ENCODE measurements at regions of chr1 and their contacts with region 1.

Region 1: GRCh38 chr1:36172983-36173382 is 17.0 kb downstream of the MAP7D1 start:
- DNase-seq: no peak
- ATAC-seq: no peak
- H3K4me3 ChIP-seq: no peak overlapping the region
- H3K4me3 Mint-ChIP-seq: no peak overlapping the region
- H3K27ac ChIP-seq: no peak overlapping the region
- H3K27ac Mint-ChIP-seq: peak overlapping the region; percentile 34 to 39
- H3K4me1 ChIP-seq: peaks cover 0 to 27% of the 10 kb centered on the region in 2 experiments
- H3K4me1 Mint-ChIP-seq: peaks cover 22 to 30% (median 23%) of the 10 kb centered on the region in 3 donors
- H3K27me3 ChIP-seq: no peaks in the 10 kb centered on the region
- H3K27me3 Mint-ChIP-seq: no peaks in the 10 kb centered on the region

Region 2: GRCh38 chr1:36040238-36040637 is 132.7 kb before region 1 on chr1:
- CTCF ChIA-PET with region 1: no interaction called
- POLR2A ChIA-PET with region 1: no interaction called
- DNase-seq: no peak
- ATAC-seq: no peak
- H3K4me3 ChIP-seq: no peak overlapping the region
- H3K4me3 Mint-ChIP-seq: no peak overlapping the region
- H3K27ac ChIP-seq: no peak overlapping the region
- H3K27ac Mint-ChIP-seq: no peak overlapping the region
- H3K4me1 ChIP-seq: no peaks in the 10 kb centered on the region
- H3K4me1 Mint-ChIP-seq: no peaks in the 10 kb centered on the region
- H3K27me3 ChIP-seq: no peaks in the 10 kb centered on the region
- H3K27me3 Mint-ChIP-seq: no peaks in the 10 kb centered on the region

Region 3: DNA sequence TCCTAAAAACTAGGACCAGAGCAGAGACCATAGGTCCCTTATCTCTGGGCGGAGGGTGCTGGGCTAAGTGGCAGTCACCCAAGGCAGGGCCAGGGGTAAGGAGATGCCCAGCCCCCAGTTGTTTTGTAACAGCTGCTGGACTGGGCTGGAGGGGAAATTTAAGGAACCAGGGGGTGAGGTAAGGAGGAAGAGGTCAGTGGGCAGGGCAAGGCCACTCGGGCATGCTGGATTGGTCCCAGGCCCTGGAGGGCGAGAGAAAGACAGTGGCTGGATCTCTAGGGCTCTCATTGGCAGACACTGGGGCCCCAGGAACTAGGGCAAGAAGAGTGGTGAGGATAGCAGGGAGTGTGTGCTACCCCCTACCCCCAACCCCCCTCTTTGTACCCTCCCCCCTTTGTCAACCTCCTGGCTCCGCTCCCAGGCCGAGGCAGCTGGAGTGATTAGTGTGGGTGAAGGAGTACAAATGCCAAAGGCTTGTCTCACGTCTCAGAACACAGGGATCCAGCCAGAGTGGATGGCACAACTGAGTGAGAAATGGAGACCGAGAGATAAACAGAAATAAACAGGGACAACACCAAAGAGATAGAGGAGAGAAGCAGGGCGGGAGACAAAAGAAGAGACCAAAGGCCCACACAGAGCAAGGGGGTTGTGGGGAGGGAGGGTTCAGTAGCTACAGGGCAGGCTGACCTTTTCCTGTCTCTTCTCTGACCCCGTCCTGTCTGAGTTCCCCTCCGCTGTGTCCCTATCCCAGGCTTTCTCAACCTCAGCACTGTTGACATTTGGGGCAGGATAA is 30.8 kb after region 1 on chr1:
- CTCF ChIA-PET with region 1: interaction called in 1 of 2 experiments, 11 read pairs
- POLR2A ChIA-PET with region 1: no interaction called
- DNase-seq: peak in 2 of 35 experiments; percentile 9 to 20
- ATAC-seq: no peak
- H3K4me3 ChIP-seq: no peak overlapping the region
- H3K4me3 Mint-ChIP-seq: no peak overlapping the region
- H3K27ac ChIP-seq: no peak overlapping the region
- H3K27ac Mint-ChIP-seq: no peak overlapping the region
- H3K4me1 ChIP-seq: no peaks in the 10 kb centered on the region
- H3K4me1 Mint-ChIP-seq: no peaks in the 10 kb centered on the region
- H3K27me3 ChIP-seq: peaks cover 0 to 22% of the 10 kb centered on the region in 2 experiments
- H3K27me3 Mint-ChIP-seq: peaks cover 0 to 4% of the 10 kb centered on the region in 2 donors

Region 4: DNA sequence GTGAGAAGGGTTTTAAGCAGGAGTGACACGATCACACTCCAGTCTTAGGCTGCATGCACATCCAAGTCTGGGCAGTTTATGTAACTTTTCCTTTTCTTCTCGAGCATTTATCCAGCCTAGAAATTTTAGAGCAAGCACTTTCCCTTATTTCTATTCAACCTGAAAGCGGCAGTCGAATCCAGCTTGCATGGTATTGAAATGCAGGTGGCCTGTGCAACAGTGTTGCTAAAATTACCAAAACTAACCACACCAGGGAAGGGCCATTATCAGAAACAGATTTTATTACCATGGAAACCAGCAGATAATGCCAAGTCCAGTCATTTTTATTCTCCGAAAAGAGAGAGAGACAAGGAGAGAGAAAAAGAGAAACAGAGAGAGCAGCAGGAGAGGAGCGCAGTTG is 1121.5 kb after region 1 on chr1:
- CTCF ChIA-PET with region 1: no interaction called
- POLR2A ChIA-PET with region 1: no interaction called
- DNase-seq: no peak
- ATAC-seq: no peak
- H3K4me3 ChIP-seq: no peak overlapping the region
- H3K4me3 Mint-ChIP-seq: no peak overlapping the region
- H3K27ac ChIP-seq: no peak overlapping the region
- H3K27ac Mint-ChIP-seq: no peak overlapping the region
- H3K4me1 ChIP-seq: no peaks in the 10 kb centered on the region
- H3K4me1 Mint-ChIP-seq: no peaks in the 10 kb centered on the region
- H3K27me3 ChIP-seq: peaks cover 0 to 27% of the 10 kb centered on the region in 2 experiments
- H3K27me3 Mint-ChIP-seq: peaks cover 41 to 42% of the 10 kb centered on the region in 2 donors

Measured in T-cell (primary cell).